H1 (cell line): ENCODE measurements at regions of chr9 and their contacts with region 1.

Region 1: DNA sequence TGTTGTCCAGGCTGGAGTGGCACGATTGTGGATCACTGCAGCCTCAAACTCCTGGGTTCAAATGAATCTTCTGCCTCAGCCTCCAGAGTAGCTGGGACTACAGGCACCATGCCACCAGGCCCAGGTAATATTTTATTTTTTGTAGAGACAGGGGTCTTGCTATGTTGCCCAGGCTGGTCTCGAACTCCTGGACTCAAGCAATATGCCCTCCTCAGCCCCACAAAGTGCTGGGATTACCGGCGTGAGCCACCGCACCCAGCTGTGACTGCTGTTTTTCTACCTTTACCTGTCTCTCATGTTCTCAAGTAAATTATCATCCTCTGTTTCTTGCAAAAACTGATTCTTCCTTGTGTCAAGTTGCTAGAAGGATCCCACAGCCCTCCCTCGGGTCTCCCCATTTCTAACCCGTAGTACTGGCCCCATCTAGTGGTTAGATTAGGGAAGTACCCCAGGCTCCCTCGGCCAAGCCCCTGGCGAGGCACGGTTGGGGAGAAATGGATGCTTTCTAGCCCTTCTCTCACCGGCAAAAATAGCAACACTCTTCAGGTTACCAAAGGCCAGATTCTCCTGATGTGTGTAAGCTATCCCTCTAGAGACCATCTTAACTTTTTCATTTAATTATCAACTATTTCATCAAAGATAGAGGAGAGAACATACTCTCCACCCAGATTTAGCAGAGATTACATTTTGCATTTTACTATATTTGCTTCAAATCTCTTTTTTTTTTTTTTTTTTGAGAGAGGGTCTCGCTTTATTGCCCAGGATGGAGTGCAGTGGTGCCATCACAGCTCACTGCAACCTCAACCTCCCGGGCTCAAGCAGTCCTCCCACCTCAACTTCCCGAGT is 19.2 kb upstream of the TOR1B start:
- DNase-seq: peak; percentile 44 to 92
- H3K4me3 ChIP-seq: no peak overlapping the region
- H3K27ac ChIP-seq: no peak overlapping the region
- H3K4me1 ChIP-seq: no peaks in the 10 kb centered on the region
- H3K27me3 ChIP-seq: no peaks in the 10 kb centered on the region
- CTCF ChIP-seq: peak; percentile 82 to 93 (median 89)
- EP300 ChIP-seq: no peak
- POLR2A ChIP-seq: no peak
- RAD21 ChIP-seq: peak; percentile 98

Region 2: GRCh38 chr9:129641746-129642513 is 141.8 kb before region 1 on chr9 and contains the start of gene ASB6:
- CTCF ChIA-PET with region 1: interaction called, 26 read pairs
- POLR2A ChIA-PET with region 1: no interaction called
- DNase-seq: peak; percentile 83 to 100
- H3K4me3 ChIP-seq: peak within 1 kb of the TSS; percentile 66 to 98 (median 84)
- H3K27ac ChIP-seq: no peak within 1 kb of the TSS
- H3K4me1 ChIP-seq: peaks cover 0 to 10% (median 6%) of the 10 kb centered on the region in 4 experiments; a peak in 4 of 7 replicates
- H3K27me3 ChIP-seq: no peaks in the 10 kb centered on the region
- CTCF ChIP-seq: peak in 1 of 3 experiments; percentile 97; a peak in 3 of 4 replicates
- EP300 ChIP-seq: peak in 1 of 2 experiments; percentile 73; a peak in 1 of 3 replicates
- POLR2A ChIP-seq: peak in 1 of 2 experiments; percentile 62; a peak in 1 of 3 replicates
- RAD21 ChIP-seq: peak; percentile 92 to 93
- total RNA-seq, gene ASB6: 17.3 TPM in 2 replicates

Region 3: DNA sequence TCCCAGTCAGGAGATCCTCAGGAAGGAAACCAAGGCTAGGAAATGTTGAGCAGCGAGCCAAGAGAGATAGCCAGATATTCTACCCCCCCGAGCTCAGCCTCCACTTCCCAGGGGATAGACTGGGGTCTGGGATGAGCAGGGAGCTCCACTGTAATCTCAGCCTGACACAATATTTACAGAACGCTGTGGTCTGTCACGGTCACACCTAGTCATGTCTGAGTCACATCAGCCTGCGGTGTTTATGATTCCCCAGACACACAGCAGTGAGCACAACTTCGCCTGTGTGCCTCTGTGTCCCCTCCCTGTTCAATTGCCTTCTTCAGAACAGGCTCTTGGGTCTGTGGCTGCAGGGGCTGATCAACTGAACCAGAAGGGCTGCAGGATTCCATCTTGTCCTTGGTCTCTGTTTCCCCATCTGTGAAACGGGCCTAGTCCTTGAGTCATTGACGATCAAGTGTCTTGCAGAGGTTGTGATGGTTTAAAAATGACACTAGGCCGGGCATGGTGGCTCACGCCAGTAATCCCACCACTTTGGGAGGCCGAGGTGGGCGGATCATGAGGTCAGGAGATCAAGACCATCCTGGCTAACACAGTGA is 126.8 kb before region 1 on chr9:
- CTCF ChIA-PET with region 1: interaction called, 11 read pairs
- POLR2A ChIA-PET with region 1: no interaction called
- DNase-seq: no peak
- H3K4me3 ChIP-seq: no peak overlapping the region
- H3K27ac ChIP-seq: no peak overlapping the region
- H3K4me1 ChIP-seq: no peaks in the 10 kb centered on the region
- H3K27me3 ChIP-seq: no peaks in the 10 kb centered on the region; a peak in 1 of 7 replicates
- CTCF ChIP-seq: no peak
- EP300 ChIP-seq: no peak
- POLR2A ChIP-seq: no peak
- RAD21 ChIP-seq: no peak

Region 4: DNA sequence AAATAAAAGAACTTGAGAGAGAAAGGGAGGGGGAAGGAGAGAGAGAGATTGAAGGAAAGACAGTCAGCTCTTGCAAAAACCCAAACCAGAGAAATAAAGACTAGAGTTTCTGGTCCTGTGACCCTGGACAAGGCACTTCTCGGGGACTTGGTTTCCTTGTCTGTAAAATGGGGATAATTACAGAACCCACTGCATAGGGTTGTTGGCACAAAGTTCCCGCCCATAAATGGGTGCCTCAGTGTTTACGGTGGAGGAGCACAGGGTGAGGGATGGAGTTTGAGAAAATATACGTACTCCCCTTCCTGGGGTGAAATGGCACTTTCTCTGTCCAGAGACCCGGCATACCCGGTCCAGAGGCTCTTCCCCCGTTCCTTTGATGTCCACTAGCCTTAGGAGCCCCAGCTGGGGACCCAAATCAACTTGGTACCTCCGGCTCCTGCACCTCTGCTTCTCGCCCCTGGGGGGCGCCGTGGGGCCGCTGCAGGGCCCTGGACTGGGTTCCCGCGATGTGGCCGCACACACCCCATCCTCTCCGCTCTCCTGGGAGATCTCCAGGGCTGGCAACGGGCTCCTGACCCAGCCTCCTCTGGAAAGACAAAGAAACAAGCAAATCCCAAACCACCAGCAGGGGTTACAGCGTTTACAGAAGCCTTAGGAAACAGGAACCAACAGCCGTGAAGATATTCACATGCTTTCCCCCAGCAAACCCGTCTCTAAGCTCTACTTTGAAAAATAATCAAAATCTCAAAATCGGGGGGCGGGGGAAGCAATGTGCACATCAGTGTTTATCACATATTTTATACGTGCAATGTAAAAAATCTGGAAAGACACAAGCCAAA is 57.2 kb before region 1 on chr9:
- CTCF ChIA-PET with region 1: interaction called, 113 read pairs
- POLR2A ChIA-PET with region 1: interaction called, 3 read pairs
- DNase-seq: peak; percentile 76 to 93
- H3K4me3 ChIP-seq: no peak overlapping the region
- H3K27ac ChIP-seq: no peak overlapping the region
- H3K4me1 ChIP-seq: peaks cover 0 to 2% (median 0%) of the 10 kb centered on the region in 4 experiments; a peak in 1 of 7 replicates
- H3K27me3 ChIP-seq: no peaks in the 10 kb centered on the region
- CTCF ChIP-seq: peak; percentile 80 to 96 (median 91)
- EP300 ChIP-seq: 0 out of 3 replicates have a peak, but pooled peaks of 1 of the 2 experiments have one; percentile 43
- POLR2A ChIP-seq: no peak
- RAD21 ChIP-seq: peak; percentile 79 to 88

Region 5: GRCh38 chr9:129752915-129753729 is 30.6 kb before region 1 on chr9 and contains the start of gene PTGES:
- CTCF ChIA-PET with region 1: interaction called, 25 read pairs
- POLR2A ChIA-PET with region 1: no interaction called
- DNase-seq: peak in 1 of 2 experiments; percentile 78
- H3K4me3 ChIP-seq: peak within 1 kb of the TSS in 2 of 4 experiments; percentile 15 to 23; a peak in 3 of 8 replicates
- H3K27ac ChIP-seq: no peak within 1 kb of the TSS
- H3K4me1 ChIP-seq: peaks cover 0 to 12% (median 11%) of the 10 kb centered on the region in 4 experiments; a peak in 5 of 7 replicates
- H3K27me3 ChIP-seq: no peaks in the 10 kb centered on the region; a peak in 1 of 7 replicates
- CTCF ChIP-seq: no peak
- EP300 ChIP-seq: no peak
- POLR2A ChIP-seq: no peak
- RAD21 ChIP-seq: no peak
- total RNA-seq, gene PTGES: 3.2 TPM in 2 replicates

Region 6: DNA sequence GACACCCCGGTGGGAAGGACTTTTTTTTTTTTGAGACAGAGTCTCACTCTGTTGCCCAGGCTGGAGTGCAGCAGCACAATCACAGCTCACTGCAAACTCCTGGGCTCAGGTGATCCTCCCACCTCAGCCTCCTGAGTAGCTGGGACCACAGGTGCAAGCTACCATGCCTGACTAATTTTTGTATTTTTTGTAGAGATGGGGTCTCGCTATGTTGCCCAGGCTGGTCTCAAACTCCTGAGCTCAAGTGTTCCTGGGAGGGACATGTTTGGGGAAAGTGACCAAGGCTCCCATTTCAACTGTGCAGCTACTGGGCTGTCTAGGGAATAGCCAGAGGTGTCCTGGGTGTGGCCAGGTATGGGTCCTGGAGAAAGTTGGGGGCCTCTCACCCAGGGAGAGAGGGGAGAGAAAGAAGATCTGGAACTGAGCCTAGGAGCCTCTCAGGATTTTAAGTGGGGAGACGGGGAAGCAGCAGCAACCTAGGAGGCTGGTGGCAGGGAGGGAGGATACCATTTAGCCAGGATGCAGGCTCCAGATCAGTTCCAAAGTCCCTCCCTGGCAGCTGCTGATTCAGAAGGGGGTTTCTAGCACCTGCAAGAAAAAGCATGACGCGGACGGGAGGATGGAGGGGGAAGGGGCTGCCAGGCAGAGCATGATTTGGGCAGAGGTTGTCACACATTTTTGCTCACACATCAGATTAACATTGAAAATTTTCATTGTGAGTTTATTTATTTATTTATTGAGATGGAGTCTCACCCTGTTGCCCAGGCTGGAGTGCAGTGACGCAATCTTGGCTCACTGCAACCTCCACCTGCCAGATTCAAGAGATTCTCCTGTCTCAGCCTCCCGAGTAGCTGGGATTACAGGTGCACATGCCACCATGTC is 12.5 kb after region 1 on chr9:
- CTCF ChIA-PET with region 1: interaction called, 17 read pairs
- POLR2A ChIA-PET with region 1: no interaction called
- DNase-seq: no peak
- H3K4me3 ChIP-seq: no peak overlapping the region
- H3K27ac ChIP-seq: no peak overlapping the region
- H3K4me1 ChIP-seq: no peaks in the 10 kb centered on the region
- H3K27me3 ChIP-seq: peaks cover 0 to 4% (median 0%) of the 10 kb centered on the region in 4 experiments; a peak in 1 of 7 replicates
- CTCF ChIP-seq: no peak
- EP300 ChIP-seq: no peak
- POLR2A ChIP-seq: no peak
- RAD21 ChIP-seq: no peak

Region 7: DNA sequence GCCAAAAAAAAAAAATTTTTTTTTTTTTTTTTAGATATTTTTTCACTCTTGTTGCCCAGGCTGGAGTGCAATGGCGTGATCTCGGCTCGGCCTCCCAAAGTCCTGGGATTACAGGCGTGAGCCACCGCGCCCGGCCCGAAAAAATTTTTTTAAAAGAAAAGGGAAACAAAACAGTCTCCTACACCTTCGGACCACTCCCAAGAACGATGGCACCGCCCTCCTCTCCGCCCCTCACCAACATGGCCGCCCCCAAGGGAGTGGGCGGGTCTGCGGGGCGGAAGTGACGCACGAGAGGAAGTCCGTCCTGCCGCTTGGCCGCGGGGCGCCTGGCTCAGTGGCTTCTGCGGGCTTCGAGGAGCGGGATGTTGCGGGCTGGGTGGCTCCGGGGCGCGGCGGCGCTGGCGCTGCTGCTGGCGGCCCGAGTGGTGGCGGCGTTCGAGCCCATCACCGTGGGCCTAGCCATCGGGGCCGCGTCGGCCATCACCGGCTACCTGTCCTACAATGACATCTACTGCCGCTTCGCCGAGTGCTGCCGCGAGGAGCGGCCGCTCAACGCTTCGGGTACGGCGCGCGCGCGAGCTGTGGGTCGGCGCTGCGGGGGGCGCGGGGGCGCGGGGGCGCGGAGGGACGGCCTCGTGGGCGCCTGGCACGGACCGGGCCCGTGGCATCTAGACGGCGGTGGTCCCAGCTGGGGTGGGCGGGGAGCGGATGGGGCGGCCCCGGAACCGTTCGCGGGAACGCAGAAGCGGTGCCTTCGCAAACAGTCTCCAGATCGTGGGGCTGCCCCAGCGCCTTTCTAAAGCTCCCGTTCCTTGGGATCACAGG is 19.3 kb after region 1 on chr9 and contains the start of gene TOR1B:
- CTCF ChIA-PET with region 1: interaction called, 11 read pairs
- POLR2A ChIA-PET with region 1: interaction called, 3 read pairs
- DNase-seq: peak; percentile 77 to 98
- H3K4me3 ChIP-seq: peak within 1 kb of the TSS; percentile 65 to 100 (median 86)
- H3K27ac ChIP-seq: no peak within 1 kb of the TSS
- H3K4me1 ChIP-seq: peaks cover 0 to 5% (median 2%) of the 10 kb centered on the region in 4 experiments; a peak in 5 of 7 replicates
- H3K27me3 ChIP-seq: no peaks in the 10 kb centered on the region
- CTCF ChIP-seq: no peak
- EP300 ChIP-seq: no peak
- POLR2A ChIP-seq: peak in 1 of 2 experiments; percentile 79; a peak in 2 of 3 replicates
- RAD21 ChIP-seq: no peak
- total RNA-seq, gene TOR1B: 17.4 and 19.2 TPM in 2 replicates